HEK293 (cell line): ENCODE measurements at regions of chr6 and their contacts with region 1.

Region 1: DNA sequence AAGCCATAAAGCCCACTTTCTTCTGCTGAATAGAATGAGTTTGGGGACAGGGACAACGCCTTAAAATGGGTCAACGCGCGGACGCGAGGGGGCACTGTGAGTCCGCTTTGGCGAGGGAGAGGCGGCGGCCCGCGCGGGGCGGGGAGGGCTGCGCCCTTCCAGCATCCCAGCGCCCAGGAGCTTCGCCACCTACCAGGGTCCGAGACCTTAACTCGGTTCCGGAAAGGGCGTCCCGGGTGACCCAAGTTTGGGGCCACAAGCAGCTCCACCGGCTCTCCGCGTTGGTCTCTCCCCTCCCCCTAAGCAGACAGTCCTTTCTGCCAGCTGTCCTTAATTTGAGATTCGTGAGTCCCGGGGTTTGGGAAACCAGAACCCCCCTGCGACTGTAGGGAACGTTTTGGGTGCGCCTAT is 1.8 kb upstream of the SAMD5 start:
- H3K4me3 ChIP-seq: peak overlapping the region; percentile 79
- H3K27ac ChIP-seq: no peak overlapping the region; the same call in 1 of the 2 replicates
- H3K4me1 ChIP-seq: peaks cover 11% of the 10 kb centered on the region
- CTCF ChIP-seq: peak; percentile 88

Region 2: DNA sequence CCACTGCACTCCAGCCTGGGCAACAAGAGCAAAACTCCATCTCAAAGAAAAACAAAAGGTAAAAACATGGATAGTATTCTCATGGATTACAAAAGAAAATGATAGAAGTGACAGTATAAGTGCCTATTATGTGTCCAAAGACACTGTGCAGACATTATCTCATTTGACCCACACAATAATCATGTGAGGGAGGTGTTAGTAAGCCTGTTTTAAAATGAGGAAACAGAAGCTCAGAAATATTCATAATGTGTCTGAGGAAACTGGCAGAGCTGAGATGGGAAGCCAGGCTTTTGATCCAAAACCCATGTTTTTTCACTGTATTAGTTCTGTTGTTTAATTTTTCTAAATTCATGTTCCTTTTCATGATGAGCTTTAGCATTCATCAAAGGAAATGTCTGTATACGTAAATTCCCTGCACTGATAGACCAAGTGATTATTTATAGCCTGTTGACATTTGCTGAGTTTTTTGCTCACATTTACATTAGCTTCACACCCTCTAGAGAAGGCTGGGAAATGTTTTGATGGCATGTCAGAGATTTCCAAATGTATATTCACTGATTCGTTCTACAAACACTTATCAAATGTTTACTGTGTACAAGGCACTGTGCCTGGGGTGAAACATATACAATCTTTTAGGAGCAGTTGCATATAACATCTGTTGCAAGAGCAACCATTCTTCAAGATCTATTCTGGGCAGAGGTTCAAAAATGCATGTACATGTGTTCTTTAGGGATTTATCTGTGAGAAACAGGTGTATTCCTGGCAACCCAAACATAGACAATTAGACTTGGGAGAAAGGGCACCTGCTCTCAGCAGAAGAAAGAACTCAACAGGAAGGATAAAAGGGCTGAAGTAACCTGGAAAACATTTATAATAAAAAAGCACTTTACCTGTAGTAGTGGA is 333.2 kb after region 1 on chr6:
- CTCF ChIA-PET with region 1: no interaction called
- POLR2A ChIA-PET with region 1: no interaction called
- H3K4me3 ChIP-seq: no peak overlapping the region
- H3K27ac ChIP-seq: no peak overlapping the region
- H3K4me1 ChIP-seq: no peaks in the 10 kb centered on the region
- CTCF ChIP-seq: no peak

Region 3: GRCh38 chr6:147961481-147962141 is 454.9 kb after region 1 on chr6:
- CTCF ChIA-PET with region 1: interaction called, 12 read pairs
- POLR2A ChIA-PET with region 1: no interaction called
- H3K4me3 ChIP-seq: no peak overlapping the region
- H3K27ac ChIP-seq: no peak overlapping the region
- H3K4me1 ChIP-seq: peaks cover 4% of the 10 kb centered on the region; the same call in 1 of the 2 replicates
- CTCF ChIP-seq: no peak

Region 4: GRCh38 chr6:147970975-147971374 is 464.3 kb after region 1 on chr6:
- CTCF ChIA-PET with region 1: interaction called, 29 read pairs
- POLR2A ChIA-PET with region 1: no interaction called
- H3K4me3 ChIP-seq: no peak overlapping the region
- H3K27ac ChIP-seq: no peak overlapping the region
- H3K4me1 ChIP-seq: no peaks in the 10 kb centered on the region
- CTCF ChIP-seq: no peak

Region 5: DNA sequence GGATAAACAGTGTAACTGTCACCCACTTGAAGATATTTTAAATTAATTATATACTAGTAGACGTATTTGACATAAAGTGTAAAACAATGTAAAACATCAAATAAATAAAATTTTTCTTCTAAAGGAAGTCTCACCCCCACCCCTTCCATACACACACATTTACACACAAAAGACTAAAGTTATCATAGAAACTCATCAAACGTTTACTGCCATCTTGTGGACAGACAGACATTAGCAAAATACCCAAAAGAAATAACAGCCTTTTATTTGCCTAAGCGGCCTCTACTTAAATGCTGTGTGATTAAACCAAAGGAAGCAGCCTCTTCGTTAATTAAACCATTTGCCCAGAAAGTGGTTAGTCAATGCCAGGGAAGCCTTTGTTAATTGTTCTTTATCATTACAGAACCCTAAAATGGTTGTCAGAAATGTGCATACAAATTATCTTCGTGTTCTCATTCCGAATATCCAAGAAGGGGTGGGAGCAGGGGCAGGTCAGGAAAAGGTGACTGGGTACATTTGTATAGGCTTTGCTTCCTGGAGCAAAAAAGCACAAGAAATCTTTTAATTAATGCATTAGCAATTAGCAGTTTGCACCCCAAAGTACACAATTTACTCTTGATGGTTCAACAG is 659.7 kb after region 1 on chr6:
- CTCF ChIA-PET with region 1: interaction called, 80 read pairs
- POLR2A ChIA-PET with region 1: no interaction called
- H3K4me3 ChIP-seq: no peak overlapping the region
- H3K27ac ChIP-seq: no peak overlapping the region
- H3K4me1 ChIP-seq: no peaks in the 10 kb centered on the region
- CTCF ChIP-seq: peak; percentile 47